CD8-positive, alpha-beta T cell (primary cell): ENCODE measurements at regions of chr1 and their contacts with region 1.

Region 1: GRCh38 chr1:173429471-173430402 is 47.4 kb upstream of the PRDX6 start:
- DNase-seq: peak; percentile 46 to 81 (median 69)
- ATAC-seq: peak; percentile 81
- H3K4me3 ChIP-seq: no peak overlapping the region
- H3K4me3 Mint-ChIP-seq: peak overlapping the region; percentile 53
- H3K27ac ChIP-seq: no peak overlapping the region
- H3K27ac Mint-ChIP-seq: peak overlapping the region; percentile 71
- H3K4me1 ChIP-seq: peaks cover 24% of the 10 kb centered on the region
- H3K4me1 Mint-ChIP-seq: peaks cover 26% of the 10 kb centered on the region
- H3K27me3 ChIP-seq: no peaks in the 10 kb centered on the region
- H3K27me3 Mint-ChIP-seq: no peaks in the 10 kb centered on the region
- CTCF ChIP-seq: peak; percentile 67

Region 2: DNA sequence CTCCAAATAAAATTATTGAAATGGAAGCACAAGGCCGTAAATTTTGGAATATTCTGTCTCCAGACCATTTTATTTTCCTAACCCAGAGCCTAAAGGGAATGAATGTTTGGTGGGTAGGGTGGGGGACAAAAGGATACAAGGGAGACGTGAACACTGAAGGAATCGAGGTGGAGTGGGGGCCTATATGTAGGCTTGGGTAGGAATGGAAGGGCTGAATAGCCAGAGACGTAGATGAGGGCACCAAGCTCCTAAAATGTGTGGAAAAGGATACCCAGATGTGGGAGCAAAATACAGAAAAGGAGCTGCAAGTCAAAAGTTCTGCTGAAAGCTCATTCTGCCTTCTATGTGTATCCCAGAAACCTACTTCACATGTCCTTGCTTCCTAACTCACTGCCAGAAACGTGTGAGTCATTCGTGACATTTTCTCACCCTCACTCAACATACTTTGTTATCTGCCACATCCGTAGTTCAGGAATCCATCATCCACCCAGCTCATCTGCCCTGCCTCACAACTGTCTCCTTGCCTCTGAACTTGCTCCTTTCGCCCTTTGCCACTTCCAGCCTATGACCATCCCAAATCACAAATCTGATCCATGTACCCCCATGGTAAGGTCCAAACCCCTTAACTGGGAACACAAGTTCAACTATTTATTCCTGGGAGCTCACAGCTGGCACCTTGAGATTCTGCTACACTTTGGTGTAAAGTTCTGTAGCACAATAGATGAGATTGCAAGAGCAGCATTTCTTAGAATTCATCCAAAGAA is 36.7 kb before region 1 on chr1:
- CTCF ChIA-PET with region 1: no interaction called
- POLR2A ChIA-PET with region 1: no interaction called
- intact Hi-C with region 1: no loop called
- DNase-seq: no peak
- ATAC-seq: no peak
- H3K4me3 ChIP-seq: no peak overlapping the region
- H3K4me3 Mint-ChIP-seq: no peak overlapping the region
- H3K27ac ChIP-seq: no peak overlapping the region
- H3K27ac Mint-ChIP-seq: no peak overlapping the region
- H3K4me1 ChIP-seq: no peaks in the 10 kb centered on the region
- H3K4me1 Mint-ChIP-seq: no peaks in the 10 kb centered on the region
- H3K27me3 ChIP-seq: no peaks in the 10 kb centered on the region
- H3K27me3 Mint-ChIP-seq: no peaks in the 10 kb centered on the region
- CTCF ChIP-seq: no peak

Region 3: DNA sequence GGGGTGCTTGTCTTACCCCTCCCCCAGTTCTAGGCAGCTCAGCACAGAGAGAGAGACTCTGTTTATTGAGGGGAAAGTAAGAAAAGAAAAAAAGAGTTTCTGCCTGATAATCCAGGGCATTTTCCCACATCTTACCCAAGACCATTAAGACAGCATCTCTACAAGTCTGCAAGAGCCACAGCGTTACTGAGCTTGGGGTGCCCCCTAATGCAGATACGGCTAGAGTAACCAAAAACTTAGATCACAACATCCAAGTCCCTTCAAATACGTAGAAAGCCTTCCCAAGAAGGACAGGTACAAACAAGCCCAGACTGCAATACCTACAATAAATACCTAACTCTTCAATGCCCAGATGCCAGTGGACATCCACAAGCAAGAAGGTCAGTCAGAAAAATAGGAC is 199.2 kb after region 1 on chr1:
- CTCF ChIA-PET with region 1: interaction called, 7 read pairs
- POLR2A ChIA-PET with region 1: no interaction called
- intact Hi-C with region 1: loop called (anchors 1 to 2 kb)
- DNase-seq: peak in 2 of 9 experiments; percentile 19 to 43
- ATAC-seq: no peak
- H3K4me3 ChIP-seq: no peak overlapping the region
- H3K4me3 Mint-ChIP-seq: no peak overlapping the region
- H3K27ac ChIP-seq: no peak overlapping the region
- H3K27ac Mint-ChIP-seq: no peak overlapping the region
- H3K4me1 ChIP-seq: no peaks in the 10 kb centered on the region
- H3K4me1 Mint-ChIP-seq: no peaks in the 10 kb centered on the region
- H3K27me3 ChIP-seq: no peaks in the 10 kb centered on the region
- H3K27me3 Mint-ChIP-seq: no peaks in the 10 kb centered on the region
- CTCF ChIP-seq: no peak

Region 4: GRCh38 chr1:173779936-173780335 is 350.2 kb after region 1 on chr1:
- CTCF ChIA-PET with region 1: interaction called, 12 read pairs
- POLR2A ChIA-PET with region 1: no interaction called
- intact Hi-C with region 1: no loop called
- DNase-seq: no peak
- ATAC-seq: no peak
- H3K4me3 ChIP-seq: no peak overlapping the region
- H3K4me3 Mint-ChIP-seq: no peak overlapping the region
- H3K27ac ChIP-seq: no peak overlapping the region
- H3K27ac Mint-ChIP-seq: peak overlapping the region; percentile 77
- H3K4me1 ChIP-seq: no peaks in the 10 kb centered on the region
- H3K4me1 Mint-ChIP-seq: peaks cover 4% of the 10 kb centered on the region
- H3K27me3 ChIP-seq: no peaks in the 10 kb centered on the region
- H3K27me3 Mint-ChIP-seq: no peaks in the 10 kb centered on the region
- CTCF ChIP-seq: no peak

Region 5: DNA sequence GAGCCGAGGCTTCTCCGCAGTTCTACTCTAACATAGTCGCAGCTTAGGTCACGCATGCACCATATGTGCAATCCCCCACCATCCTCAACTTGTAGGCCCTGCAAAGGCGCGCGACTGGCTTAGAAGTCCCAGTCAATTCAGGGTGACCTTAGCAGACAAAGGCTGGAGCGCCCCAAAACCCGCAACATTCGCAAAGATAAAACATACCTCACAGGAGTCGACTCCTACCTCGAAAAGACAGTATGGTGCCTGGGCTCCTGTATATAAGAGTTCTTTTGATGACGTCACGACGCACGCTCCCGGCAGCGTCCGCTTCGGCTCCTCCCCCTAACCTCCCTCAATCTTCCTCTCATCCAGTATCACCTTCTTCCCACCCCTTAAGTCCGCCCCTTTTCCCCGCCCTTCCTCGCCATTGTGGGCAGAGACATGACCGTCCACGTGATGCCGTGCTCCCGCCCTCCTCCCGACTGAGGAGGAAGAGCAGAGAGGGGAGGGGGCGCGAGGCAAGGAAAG is 438.1 kb after region 1 on chr1 and contains the start of gene GAS5:
- CTCF ChIA-PET with region 1: interaction called, 3 read pairs
- POLR2A ChIA-PET with region 1: interaction called, 6 read pairs
- intact Hi-C with region 1: loop called in 1 of 2 experiments (anchors 2 kb)
- DNase-seq: peak; percentile 97 to 99 (median 98)
- ATAC-seq: peak; percentile 78
- H3K4me3 ChIP-seq: peak within 1 kb of the TSS; percentile 74 to 93
- H3K4me3 Mint-ChIP-seq: peak within 1 kb of the TSS; percentile 95
- H3K27ac ChIP-seq: peak within 1 kb of the TSS; percentile 75 to 93
- H3K27ac Mint-ChIP-seq: peak within 1 kb of the TSS; percentile 96
- H3K4me1 ChIP-seq: peaks cover 61% of the 10 kb centered on the region
- H3K4me1 Mint-ChIP-seq: peaks cover 70% of the 10 kb centered on the region
- H3K27me3 ChIP-seq: no peaks in the 10 kb centered on the region
- H3K27me3 Mint-ChIP-seq: no peaks in the 10 kb centered on the region
- CTCF ChIP-seq: no peak
- total RNA-seq, gene GAS5: 774 to 800 TPM

Region 6: DNA sequence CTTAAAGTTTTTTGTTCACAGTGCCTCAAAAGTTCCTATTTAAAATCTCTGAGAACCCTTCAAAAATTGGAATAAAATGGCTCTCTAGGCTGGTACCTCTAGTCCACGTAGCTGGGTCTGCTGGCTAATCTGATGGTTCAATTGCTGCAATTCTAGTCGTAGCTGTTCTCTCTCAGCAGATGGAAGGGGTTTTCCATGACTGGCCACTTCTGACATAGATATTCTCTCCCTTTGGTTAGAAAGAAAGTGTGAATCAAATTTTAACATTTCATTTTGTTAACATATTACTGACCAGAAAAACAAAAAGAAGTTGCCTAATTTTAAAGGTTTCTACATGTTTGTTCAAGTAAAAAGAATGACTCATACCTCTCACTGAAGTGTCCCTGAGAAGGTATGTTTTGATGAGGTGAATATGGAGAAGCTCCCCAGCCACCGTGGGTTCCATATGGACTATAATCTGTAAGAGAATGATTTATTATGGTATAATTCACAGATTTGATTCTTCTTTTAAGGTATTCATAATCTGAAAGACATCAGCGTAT is 516.7 kb after region 1 on chr1:
- CTCF ChIA-PET with region 1: no interaction called
- POLR2A ChIA-PET with region 1: no interaction called
- intact Hi-C with region 1: loop called in 1 of 2 experiments (anchors 10 kb)
- DNase-seq: no peak
- ATAC-seq: no peak
- H3K4me3 ChIP-seq: no peak overlapping the region
- H3K4me3 Mint-ChIP-seq: no peak overlapping the region
- H3K27ac ChIP-seq: no peak overlapping the region
- H3K27ac Mint-ChIP-seq: peak overlapping the region; percentile 43
- H3K4me1 ChIP-seq: no peaks in the 10 kb centered on the region
- H3K4me1 Mint-ChIP-seq: no peaks in the 10 kb centered on the region
- H3K27me3 ChIP-seq: no peaks in the 10 kb centered on the region
- H3K27me3 Mint-ChIP-seq: no peaks in the 10 kb centered on the region
- CTCF ChIP-seq: no peak

Region 7: GRCh38 chr1:174982971-174983689 is 1553.4 kb after region 1 on chr1:
- CTCF ChIA-PET with region 1: no interaction called
- POLR2A ChIA-PET with region 1: no interaction called
- intact Hi-C with region 1: loop called in 1 of 2 experiments (anchors 10 kb)
- DNase-seq: peak in 5 of 9 experiments; percentile 41 to 77 (median 63)
- ATAC-seq: peak; percentile 48
- H3K4me3 ChIP-seq: no peak overlapping the region
- H3K4me3 Mint-ChIP-seq: no peak overlapping the region
- H3K27ac ChIP-seq: no peak overlapping the region
- H3K27ac Mint-ChIP-seq: no peak overlapping the region
- H3K4me1 ChIP-seq: peaks cover 9% of the 10 kb centered on the region
- H3K4me1 Mint-ChIP-seq: peaks cover 38% of the 10 kb centered on the region
- H3K27me3 ChIP-seq: no peaks in the 10 kb centered on the region
- H3K27me3 Mint-ChIP-seq: no peaks in the 10 kb centered on the region
- CTCF ChIP-seq: peak; percentile 56